ENCODE measurements at regions of chr1 and their contacts with region 1.

Region 1: GRCh38 chr1:85911742-85912141 is 203.5 kb upstream of the ZNHIT6 start:
- DNase-seq: no peak
- H3K4me3 ChIP-seq: no peak overlapping the region
- H3K27ac ChIP-seq: no peak overlapping the region
- H3K4me1 ChIP-seq: no peaks in the 10 kb centered on the region
- H3K27me3 ChIP-seq: no peaks in the 10 kb centered on the region
- CTCF ChIP-seq: peak; percentile 66

Region 2: DNA sequence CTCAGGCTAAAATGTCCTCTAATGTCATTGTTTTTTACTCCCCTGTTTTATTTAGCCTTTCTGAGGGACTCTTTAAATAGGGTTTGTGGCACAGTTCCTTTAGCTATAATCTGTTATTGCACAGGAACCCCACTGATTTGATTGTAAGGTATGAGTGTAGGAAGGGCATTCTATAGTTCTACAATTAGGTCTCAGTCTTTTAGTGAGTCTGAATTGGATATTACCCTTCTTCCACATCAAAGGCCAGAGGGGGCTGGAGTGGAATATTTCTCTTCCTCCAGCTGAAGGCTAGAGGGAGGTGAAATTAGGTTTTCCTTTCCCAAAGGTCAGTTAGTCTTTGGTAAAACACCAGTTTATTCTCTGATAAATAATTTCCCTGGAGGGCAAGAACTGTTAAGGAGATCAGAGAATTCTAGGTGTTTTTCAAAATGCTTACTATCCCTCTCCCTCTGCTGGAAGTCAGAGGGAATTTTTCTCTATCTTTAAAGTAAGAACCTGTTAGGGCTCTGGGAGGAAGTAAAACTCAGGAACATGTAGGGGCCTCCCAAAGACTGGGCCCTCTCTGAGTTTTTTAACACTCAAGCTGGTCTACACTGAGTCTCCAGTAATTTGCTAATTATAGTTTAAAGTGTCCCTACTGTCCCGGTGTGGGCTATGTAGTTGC is 27.2 kb before region 1 on chr1:
- CTCF ChIA-PET with region 1: no interaction called
- POLR2A ChIA-PET with region 1: no interaction called
- intact Hi-C with region 1: loop called (anchors 1 kb)
- DNase-seq: no peak
- H3K4me3 ChIP-seq: no peak overlapping the region
- H3K27ac ChIP-seq: no peak overlapping the region
- H3K4me1 ChIP-seq: no peaks in the 10 kb centered on the region
- H3K27me3 ChIP-seq: no peaks in the 10 kb centered on the region
- CTCF ChIP-seq: peak; percentile 83

Region 3: DNA sequence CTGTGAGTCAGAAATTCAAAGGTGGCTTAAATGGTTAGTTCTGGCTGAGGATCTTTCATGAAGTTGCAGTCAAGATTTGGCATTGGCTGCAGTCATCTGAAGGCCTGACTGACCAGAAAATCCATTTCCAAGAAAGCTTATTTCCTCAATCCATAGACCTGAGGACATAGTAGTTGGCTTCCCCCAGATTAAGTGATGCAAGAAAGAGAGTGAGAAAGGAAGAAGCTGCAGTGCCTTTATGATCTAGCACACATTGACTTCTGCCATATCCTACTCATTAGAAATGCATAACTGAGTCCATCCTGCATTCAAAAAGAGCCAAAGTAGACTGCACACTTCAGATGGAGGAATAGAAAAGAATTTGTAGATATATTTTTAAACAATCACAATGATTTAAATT is 22.2 kb after region 1 on chr1:
- CTCF ChIA-PET with region 1: no interaction called
- POLR2A ChIA-PET with region 1: no interaction called
- intact Hi-C with region 1: no loop called
- DNase-seq: no peak
- H3K4me3 ChIP-seq: no peak overlapping the region
- H3K27ac ChIP-seq: no peak overlapping the region
- H3K4me1 ChIP-seq: no peaks in the 10 kb centered on the region
- H3K27me3 ChIP-seq: no peaks in the 10 kb centered on the region
- CTCF ChIP-seq: no peak

Region 4: GRCh38 chr1:85975912-85976371 is 64.2 kb after region 1 on chr1:
- CTCF ChIA-PET with region 1: no interaction called
- POLR2A ChIA-PET with region 1: interaction called, 15 read pairs
- intact Hi-C with region 1: no loop called
- DNase-seq: peak; percentile 58 to 63
- H3K4me3 ChIP-seq: no peak overlapping the region
- H3K27ac ChIP-seq: no peak overlapping the region
- H3K4me1 ChIP-seq: peaks cover 20% of the 10 kb centered on the region
- H3K27me3 ChIP-seq: no peaks in the 10 kb centered on the region
- CTCF ChIP-seq: no peak

Measured in PC-9 (cell line).